ENCODE measurements at regions of chr7 and their contacts with region 1.

Region 1: DNA sequence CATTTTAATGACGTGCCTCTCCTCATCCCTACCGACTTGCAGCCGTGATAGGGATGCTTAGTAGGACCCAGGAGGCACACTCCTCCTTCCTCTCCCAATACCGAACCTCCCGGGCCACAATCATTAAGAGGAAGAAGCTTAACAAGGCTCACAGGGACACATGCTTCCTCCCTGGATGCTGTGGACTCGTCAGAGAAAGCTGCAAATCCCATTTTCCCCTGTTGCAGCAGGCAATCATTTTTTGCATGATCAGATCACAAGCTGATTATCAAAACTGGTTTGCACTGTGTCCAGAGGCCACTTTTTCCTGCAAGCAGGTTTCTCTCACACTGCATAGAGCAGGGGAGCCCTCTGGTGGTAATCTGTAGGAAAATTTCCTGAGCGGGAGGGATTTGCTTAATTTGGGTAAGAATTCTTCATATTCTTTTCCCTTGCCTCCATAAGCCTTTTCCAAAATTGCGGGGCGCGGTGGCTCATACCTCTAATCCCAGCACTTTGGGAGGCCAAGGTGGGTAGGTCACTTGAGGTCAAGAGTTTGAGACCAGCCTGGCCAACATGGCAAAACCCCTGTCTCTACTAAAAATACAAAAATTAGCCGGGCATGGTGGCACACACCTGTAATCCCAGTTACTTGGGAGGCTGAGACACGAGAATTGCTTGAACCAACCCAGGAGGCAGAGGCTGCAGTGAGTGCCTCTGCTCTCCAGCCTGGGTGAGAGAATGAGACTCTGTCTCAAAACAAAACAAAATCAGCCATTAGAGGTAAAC is 16.1 kb upstream of the LAMB4 start:
- DNase-seq: peak; percentile 70 to 71
- H3K4me3 ChIP-seq: no peak overlapping the region
- H3K27ac ChIP-seq: no peak overlapping the region
- H3K4me1 ChIP-seq: no peaks in the 10 kb centered on the region
- H3K27me3 ChIP-seq: no peaks in the 10 kb centered on the region
- CTCF ChIP-seq: peak; percentile 89

Region 2: GRCh38 chr7:106947244-106947728 is 1199.0 kb before region 1 on chr7:
- CTCF ChIA-PET with region 1: no interaction called
- POLR2A ChIA-PET with region 1: no interaction called
- intact Hi-C with region 1: loop called (anchors 10 kb)
- DNase-seq: peak; percentile 50 to 60
- H3K4me3 ChIP-seq: no peak overlapping the region
- H3K27ac ChIP-seq: no peak overlapping the region
- H3K4me1 ChIP-seq: no peaks in the 10 kb centered on the region
- H3K27me3 ChIP-seq: no peaks in the 10 kb centered on the region; the same call in 1 of the 2 replicates
- CTCF ChIP-seq: peak; percentile 75

Region 3: GRCh38 chr7:107462740-107463444 is 683.4 kb before region 1 on chr7:
- CTCF ChIA-PET with region 1: no interaction called
- POLR2A ChIA-PET with region 1: no interaction called
- intact Hi-C with region 1: loop called (anchors 1 kb)
- DNase-seq: peak; percentile 60 to 65
- H3K4me3 ChIP-seq: no peak overlapping the region
- H3K27ac ChIP-seq: no peak overlapping the region
- H3K4me1 ChIP-seq: peaks cover 8% of the 10 kb centered on the region
- H3K27me3 ChIP-seq: no peaks in the 10 kb centered on the region
- CTCF ChIP-seq: peak; percentile 90

Region 4: GRCh38 chr7:107890962-107891635 is 255.2 kb before region 1 on chr7 and contains the start of gene DLD:
- CTCF ChIA-PET with region 1: no interaction called
- POLR2A ChIA-PET with region 1: no interaction called
- intact Hi-C with region 1: loop called (anchors 5 kb)
- DNase-seq: peak; percentile 79 to 92
- H3K4me3 ChIP-seq: peak within 1 kb of the TSS; percentile 61
- H3K27ac ChIP-seq: peak within 1 kb of the TSS; percentile 93
- H3K4me1 ChIP-seq: peaks cover 29% of the 10 kb centered on the region
- H3K27me3 ChIP-seq: no peaks in the 10 kb centered on the region
- CTCF ChIP-seq: no peak
- total RNA-seq, gene DLD: 109 and 157 TPM in 2 replicates

Region 5: GRCh38 chr7:107995184-107996071 is 150.8 kb before region 1 on chr7:
- CTCF ChIA-PET with region 1: interaction called, 3 read pairs
- POLR2A ChIA-PET with region 1: no interaction called
- intact Hi-C with region 1: loop called (anchors 1 kb)
- DNase-seq: peak; percentile 67 to 88
- H3K4me3 ChIP-seq: peak overlapping the region; percentile 12; the same call in 1 of the 2 replicates
- H3K27ac ChIP-seq: peak overlapping the region; percentile 75
- H3K4me1 ChIP-seq: peaks cover 69% of the 10 kb centered on the region
- H3K27me3 ChIP-seq: no peaks in the 10 kb centered on the region
- CTCF ChIP-seq: no peak